CD4-positive, alpha-beta memory T cell (primary cell): ENCODE measurements at regions of chr18 and their contacts with region 1.

Region 1: GRCh38 chr18:79528846-79529245 is 133.1 kb downstream of the NFATC1 start:
- DNase-seq: peak; percentile 72 to 78 (median 75)
- H3K4me3 ChIP-seq: no peak overlapping the region
- H3K4me3 Mint-ChIP-seq: peak overlapping the region in 1 of 8 donors; percentile 30
- H3K27ac ChIP-seq: no peak overlapping the region
- H3K27ac Mint-ChIP-seq: peak overlapping the region in 5 of 7 donors; percentile 14 to 84 (median 57)
- H3K4me1 ChIP-seq: peaks cover 15% of the 10 kb centered on the region
- H3K4me1 Mint-ChIP-seq: peaks cover 8 to 37% (median 20%) of the 10 kb centered on the region in 4 donors
- H3K27me3 ChIP-seq: no peaks in the 10 kb centered on the region
- H3K27me3 Mint-ChIP-seq: no peaks in the 10 kb centered on the region

Region 2: DNA sequence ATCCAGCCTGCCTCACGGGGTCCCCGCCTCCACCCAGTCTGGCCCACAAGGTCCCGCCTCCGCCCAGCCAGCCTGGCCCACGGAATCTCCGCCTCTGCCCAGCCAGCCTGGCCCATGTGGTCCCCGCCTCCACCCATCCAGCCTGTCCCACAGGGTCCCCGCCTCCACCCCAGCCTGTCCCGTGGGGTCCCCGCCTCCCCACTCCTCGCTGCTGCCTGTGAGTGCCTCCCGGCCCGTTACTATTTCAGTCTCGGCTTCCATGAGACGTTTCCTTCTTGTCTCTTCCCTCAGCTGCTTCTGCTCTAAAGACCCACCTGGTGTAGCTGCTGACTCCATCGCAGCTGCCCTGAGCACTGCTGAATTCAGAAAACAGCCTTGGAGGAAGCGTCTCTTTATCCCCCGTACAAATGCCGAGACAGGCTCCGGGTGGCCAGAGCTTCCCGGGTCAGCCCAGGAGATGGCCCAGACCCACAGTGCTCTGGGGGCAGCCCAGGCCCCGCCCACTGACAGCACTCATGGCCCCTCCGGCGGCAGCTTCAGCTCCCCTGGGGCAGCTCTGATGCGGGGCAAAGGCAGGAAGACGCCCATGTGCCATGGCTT is 63.4 kb before region 1 on chr18:
- CTCF ChIA-PET with region 1: no interaction called
- POLR2A ChIA-PET with region 1: no interaction called
- intact Hi-C with region 1: loop called (anchors 10 kb)
- DNase-seq: no peak
- H3K4me3 ChIP-seq: no peak overlapping the region
- H3K4me3 Mint-ChIP-seq: no peak overlapping the region
- H3K27ac ChIP-seq: no peak overlapping the region
- H3K27ac Mint-ChIP-seq: peak overlapping the region in 4 of 7 donors; percentile 25 to 72 (median 54)
- H3K4me1 ChIP-seq: no peaks in the 10 kb centered on the region
- H3K4me1 Mint-ChIP-seq: peaks cover 0 to 5% (median 3%) of the 10 kb centered on the region in 4 donors
- H3K27me3 ChIP-seq: no peaks in the 10 kb centered on the region
- H3K27me3 Mint-ChIP-seq: no peaks in the 10 kb centered on the region

Region 3: GRCh38 chr18:79644006-79644665 is 115.3 kb after region 1 on chr18:
- CTCF ChIA-PET with region 1: interaction called, 4 read pairs
- POLR2A ChIA-PET with region 1: no interaction called
- intact Hi-C with region 1: loop called (anchors 1 kb)
- DNase-seq: peak; percentile 51 to 67 (median 54)
- H3K4me3 ChIP-seq: no peak overlapping the region
- H3K4me3 Mint-ChIP-seq: no peak overlapping the region
- H3K27ac ChIP-seq: no peak overlapping the region
- H3K27ac Mint-ChIP-seq: no peak overlapping the region
- H3K4me1 ChIP-seq: peaks cover 7% of the 10 kb centered on the region
- H3K4me1 Mint-ChIP-seq: no peaks in the 10 kb centered on the region
- H3K27me3 ChIP-seq: no peaks in the 10 kb centered on the region
- H3K27me3 Mint-ChIP-seq: peaks cover 0 to 7% of the 10 kb centered on the region in 2 donors

Region 4: GRCh38 chr18:79964330-79965118 is 435.7 kb after region 1 on chr18 and contains the start of gene HSBP1L1:
- CTCF ChIA-PET with region 1: no interaction called
- POLR2A ChIA-PET with region 1: no interaction called
- intact Hi-C with region 1: loop called (anchors 10 kb)
- DNase-seq: peak; percentile 61 to 73 (median 66)
- H3K4me3 ChIP-seq: peak within 1 kb of the TSS; percentile 52 to 62
- H3K4me3 Mint-ChIP-seq: peak within 1 kb of the TSS; percentile 82 to 92 (median 86)
- H3K27ac ChIP-seq: peak within 1 kb of the TSS; percentile 54
- H3K27ac Mint-ChIP-seq: peak within 1 kb of the TSS; percentile 85 to 94 (median 90)
- H3K4me1 ChIP-seq: peaks cover 38% of the 10 kb centered on the region
- H3K4me1 Mint-ChIP-seq: peaks cover 17 to 44% (median 29%) of the 10 kb centered on the region in 4 donors
- H3K27me3 ChIP-seq: no peaks in the 10 kb centered on the region
- H3K27me3 Mint-ChIP-seq: peaks cover 0 to 3% of the 10 kb centered on the region in 2 donors
- total RNA-seq, gene HSBP1L1: 30.7 to 34.8 TPM